Activated naive CD4-positive, alpha-beta T cell treated with anti-CD3 and anti-CD28 coated beads for 36 hours (primary cell): ENCODE measurements at regions of chr1 and their contacts with region 1.

Region 1: DNA sequence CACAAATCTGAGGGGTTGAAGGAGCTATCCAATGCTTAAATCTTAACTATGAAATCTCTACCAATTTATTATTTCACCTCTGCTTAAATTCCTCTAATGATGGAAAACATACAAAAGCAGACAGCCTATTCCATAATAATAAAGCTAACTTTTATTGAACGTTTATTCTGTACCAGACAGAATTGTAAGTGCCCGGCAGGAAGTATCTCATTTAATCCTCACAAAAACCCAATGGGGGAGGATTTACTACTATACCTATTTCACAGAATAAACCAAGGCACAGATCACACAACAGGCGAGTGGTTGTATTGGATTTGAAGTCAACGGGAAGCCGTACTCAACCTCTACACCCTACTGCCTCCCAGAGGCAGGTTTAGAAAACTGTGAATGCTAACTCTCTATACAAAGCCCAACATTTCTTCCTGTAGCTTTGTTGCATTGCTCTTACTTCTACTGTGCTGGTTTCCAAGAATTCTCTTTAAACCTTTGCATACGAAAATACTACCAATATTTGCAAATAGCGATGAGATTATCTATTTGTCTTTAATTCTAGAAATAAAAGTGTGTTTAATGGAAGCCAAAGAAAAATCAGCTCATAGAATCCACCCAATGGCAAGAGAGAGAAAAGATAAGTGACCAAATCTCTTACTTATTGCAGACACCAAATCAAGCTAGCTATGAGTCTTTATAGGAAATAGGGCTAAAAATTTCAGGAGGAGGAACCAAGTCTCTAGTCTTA is 33.5 kb upstream of the C1orf53 start:
- DNase-seq: peak; percentile 56
- H3K4me3 Mint-ChIP-seq: no peak overlapping the region
- H3K27ac Mint-ChIP-seq: no peak overlapping the region
- H3K4me1 Mint-ChIP-seq: no peaks in the 10 kb centered on the region
- H3K27me3 Mint-ChIP-seq: no peaks in the 10 kb centered on the region

Region 2: DNA sequence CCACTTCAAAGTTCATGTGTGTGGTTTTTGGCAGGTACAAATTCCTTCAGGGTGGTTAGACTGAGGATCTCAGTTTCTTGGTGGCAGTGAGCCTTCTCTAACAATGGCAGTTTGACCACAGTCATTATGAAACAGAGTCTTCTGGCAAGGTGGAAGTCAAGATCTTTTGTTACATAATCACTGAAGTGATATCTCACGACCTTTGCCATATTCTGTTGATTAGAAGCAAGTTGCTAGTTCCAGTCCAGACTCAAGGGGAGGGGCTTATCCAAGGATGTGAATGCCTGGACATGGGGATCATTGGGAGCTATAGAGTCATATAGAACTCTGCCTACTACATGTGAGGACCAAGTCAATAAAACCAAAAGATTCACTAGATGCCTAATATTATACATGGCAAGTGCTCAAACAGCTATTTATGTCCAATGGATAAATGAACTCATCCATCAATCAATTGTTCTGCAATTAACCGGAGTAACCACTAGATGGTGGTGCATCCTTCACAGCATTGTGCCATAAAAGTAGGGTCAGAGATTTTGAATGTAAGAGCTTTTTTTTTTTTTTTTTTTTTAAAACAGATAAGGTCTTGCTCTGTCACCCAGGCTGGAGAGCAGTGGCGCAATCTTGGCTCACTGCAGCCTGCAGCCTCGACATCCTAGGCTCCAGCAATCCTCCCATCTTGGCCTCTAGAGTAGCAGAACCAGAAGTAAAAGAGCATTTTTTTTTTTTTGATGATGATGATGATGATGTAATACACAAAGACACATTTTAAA is 469.0 kb before region 1 on chr1:
- CTCF ChIA-PET with region 1: no interaction called
- intact Hi-C with region 1: loop called (anchors 2 kb)
- DNase-seq: peak; percentile 28
- H3K4me3 Mint-ChIP-seq: peak overlapping the region; percentile 32
- H3K27ac Mint-ChIP-seq: no peak overlapping the region
- H3K4me1 Mint-ChIP-seq: no peaks in the 10 kb centered on the region
- H3K27me3 Mint-ChIP-seq: no peaks in the 10 kb centered on the region

Region 3: GRCh38 chr1:197521118-197521739 is 347.7 kb before region 1 on chr1:
- CTCF ChIA-PET with region 1: interaction called, 21 read pairs
- intact Hi-C with region 1: loop called (anchors 1 kb)
- DNase-seq: peak; percentile 37
- H3K4me3 Mint-ChIP-seq: no peak overlapping the region
- H3K27ac Mint-ChIP-seq: no peak overlapping the region
- H3K4me1 Mint-ChIP-seq: no peaks in the 10 kb centered on the region
- H3K27me3 Mint-ChIP-seq: no peaks in the 10 kb centered on the region

Region 4: DNA sequence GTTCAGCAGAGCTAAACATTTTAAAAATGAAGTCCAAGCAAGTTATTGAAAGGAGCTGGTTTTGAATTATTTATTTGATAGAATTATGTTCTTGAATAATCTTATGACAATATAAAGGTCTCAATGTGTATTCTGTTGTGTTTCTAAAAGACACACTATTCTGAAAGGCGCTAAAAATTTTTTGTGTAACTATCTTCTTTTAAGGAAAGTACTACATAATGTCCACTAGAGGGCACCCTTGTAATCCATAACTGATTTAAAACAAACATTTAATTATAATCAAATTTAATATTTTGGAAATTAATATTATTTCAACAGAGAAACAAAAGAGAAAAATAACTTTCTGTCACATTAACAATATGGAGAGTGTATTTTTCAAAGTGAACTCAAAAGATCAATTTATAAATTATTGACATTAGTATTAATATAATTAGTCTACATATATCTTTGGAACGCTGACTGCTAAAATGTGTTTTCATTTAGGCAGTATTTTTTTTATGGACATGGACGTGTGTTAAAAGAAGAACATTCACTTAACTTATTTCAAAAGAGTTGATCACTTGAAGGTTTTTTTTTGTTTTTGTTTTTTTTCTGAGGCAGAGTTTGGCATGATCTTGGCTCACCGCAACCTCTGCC is 342.1 kb before region 1 on chr1:
- CTCF ChIA-PET with region 1: interaction called, 21 read pairs
- intact Hi-C with region 1: loop called (anchors 1 kb)
- DNase-seq: no peak
- H3K4me3 Mint-ChIP-seq: no peak overlapping the region
- H3K27ac Mint-ChIP-seq: no peak overlapping the region
- H3K4me1 Mint-ChIP-seq: no peaks in the 10 kb centered on the region
- H3K27me3 Mint-ChIP-seq: no peaks in the 10 kb centered on the region

Region 5: GRCh38 chr1:197614916-197615692 is 253.8 kb before region 1 on chr1:
- CTCF ChIA-PET with region 1: interaction called, 53 read pairs
- intact Hi-C with region 1: loop called (anchors 1 kb)
- DNase-seq: peak; percentile 49
- H3K4me3 Mint-ChIP-seq: no peak overlapping the region
- H3K27ac Mint-ChIP-seq: no peak overlapping the region
- H3K4me1 Mint-ChIP-seq: no peaks in the 10 kb centered on the region
- H3K27me3 Mint-ChIP-seq: no peaks in the 10 kb centered on the region

Region 6: GRCh38 chr1:197638316-197638715 is 230.6 kb before region 1 on chr1:
- CTCF ChIA-PET with region 1: interaction called, 10 read pairs
- intact Hi-C with region 1: no loop called
- DNase-seq: no peak
- H3K4me3 Mint-ChIP-seq: no peak overlapping the region
- H3K27ac Mint-ChIP-seq: no peak overlapping the region
- H3K4me1 Mint-ChIP-seq: no peaks in the 10 kb centered on the region
- H3K27me3 Mint-ChIP-seq: no peaks in the 10 kb centered on the region

Region 7: DNA sequence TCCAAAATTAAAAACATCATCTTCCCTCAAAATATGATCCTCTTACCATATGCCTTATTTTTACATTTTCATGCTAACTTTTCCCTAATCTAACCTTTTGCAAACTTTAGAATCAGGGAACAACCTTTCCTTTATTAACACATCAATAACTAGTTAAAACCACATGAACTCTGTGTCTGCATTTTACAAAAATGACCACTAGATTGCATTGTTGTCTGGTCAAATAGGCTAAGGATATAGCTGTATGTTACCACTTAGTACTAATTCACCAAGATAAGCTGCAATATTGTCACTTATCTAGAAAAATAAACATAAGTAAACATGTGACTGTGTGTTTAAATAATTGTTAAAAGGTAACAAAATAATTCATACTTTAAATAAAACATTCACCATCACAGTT is 176.0 kb before region 1 on chr1:
- CTCF ChIA-PET with region 1: interaction called, 5 read pairs
- intact Hi-C with region 1: loop called (anchors 1 kb)
- DNase-seq: no peak
- H3K4me3 Mint-ChIP-seq: no peak overlapping the region
- H3K27ac Mint-ChIP-seq: no peak overlapping the region
- H3K4me1 Mint-ChIP-seq: peaks cover 17% of the 10 kb centered on the region
- H3K27me3 Mint-ChIP-seq: no peaks in the 10 kb centered on the region

Region 8: DNA sequence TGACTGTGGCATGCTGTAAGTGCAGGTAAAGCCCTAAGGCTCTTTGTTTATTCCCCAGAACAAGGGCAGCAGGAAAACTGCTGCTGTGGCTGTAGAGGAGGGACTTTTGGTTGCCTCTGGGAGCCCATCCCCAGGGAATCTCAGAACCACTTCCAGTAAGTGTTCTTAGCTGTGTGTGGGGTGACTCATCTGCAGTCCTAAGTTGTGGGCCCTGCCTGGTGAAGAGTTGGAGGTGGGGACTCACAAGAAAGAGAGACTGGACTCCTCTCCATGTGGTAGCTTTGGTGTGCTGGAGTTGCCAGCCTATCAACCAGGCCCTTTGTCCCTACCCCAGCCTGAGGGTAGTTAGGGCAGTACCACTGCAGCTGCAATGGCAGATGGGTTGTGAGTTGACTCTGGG is 69.6 kb before region 1 on chr1:
- CTCF ChIA-PET with region 1: no interaction called
- intact Hi-C with region 1: no loop called
- DNase-seq: no peak
- H3K4me3 Mint-ChIP-seq: no peak overlapping the region
- H3K27ac Mint-ChIP-seq: no peak overlapping the region
- H3K4me1 Mint-ChIP-seq: no peaks in the 10 kb centered on the region
- H3K27me3 Mint-ChIP-seq: peaks cover 2% of the 10 kb centered on the region